Activated CD4-positive, alpha-beta memory T cell treated with anti-CD3 and anti-CD28 coated beads for 36 hours (primary cell): ENCODE measurements at regions of chr10 and their contacts with region 1.

Region 1: GRCh38 chr10:110354322-110354766 is 49.6 kb upstream of the SMNDC1 start:
- DNase-seq: peak; percentile 93
- H3K4me3 Mint-ChIP-seq: peak overlapping the region; percentile 82
- H3K27ac Mint-ChIP-seq: peak overlapping the region; percentile 98
- H3K4me1 Mint-ChIP-seq: peaks cover 79% of the 10 kb centered on the region
- H3K27me3 Mint-ChIP-seq: no peaks in the 10 kb centered on the region

Region 2: GRCh38 chr10:110076559-110077318 is 277.6 kb before region 1 on chr10:
- CTCF ChIA-PET with region 1: no interaction called
- POLR2A ChIA-PET with region 1: no interaction called
- intact Hi-C with region 1: loop called (anchors 5 kb)
- DNase-seq: no peak
- H3K4me3 Mint-ChIP-seq: peak overlapping the region; percentile 81
- H3K27ac Mint-ChIP-seq: peak overlapping the region; percentile 98
- H3K4me1 Mint-ChIP-seq: peaks cover 84% of the 10 kb centered on the region
- H3K27me3 Mint-ChIP-seq: no peaks in the 10 kb centered on the region

Region 3: DNA sequence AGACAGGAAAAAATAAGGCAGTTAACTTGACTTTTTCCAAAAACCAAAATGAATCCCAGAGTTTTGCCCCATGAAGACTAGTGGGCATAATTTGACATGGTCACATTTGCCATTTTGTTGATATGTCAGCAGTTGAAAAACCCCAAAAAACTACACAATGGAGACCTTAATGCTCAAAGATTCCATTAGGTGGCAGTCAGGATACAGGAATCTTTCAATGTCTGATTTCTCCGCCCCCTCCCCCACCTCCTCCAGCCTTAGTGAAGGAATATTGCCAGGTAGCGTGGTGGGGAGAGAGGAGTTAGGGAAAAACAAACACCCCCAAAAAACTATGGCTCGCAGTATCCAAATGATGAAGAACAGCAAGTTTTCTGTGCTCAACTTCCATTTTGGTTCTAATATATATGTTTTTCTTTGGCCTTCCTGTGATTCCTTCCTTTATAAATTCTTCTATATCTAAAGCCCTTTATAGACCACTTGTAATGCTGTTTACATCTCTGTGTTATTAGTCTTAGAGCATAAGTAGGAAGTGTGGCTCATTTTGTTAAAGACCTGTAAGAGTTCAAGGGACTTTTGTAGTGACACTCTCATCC is 42.9 kb before region 1 on chr10:
- CTCF ChIA-PET with region 1: interaction called, 21 read pairs
- POLR2A ChIA-PET with region 1: no interaction called
- intact Hi-C with region 1: loop called (anchors 1 kb)
- DNase-seq: peak; percentile 52
- H3K4me3 Mint-ChIP-seq: no peak overlapping the region
- H3K27ac Mint-ChIP-seq: peak overlapping the region; percentile 9
- H3K4me1 Mint-ChIP-seq: peaks cover 31% of the 10 kb centered on the region
- H3K27me3 Mint-ChIP-seq: peaks cover 2% of the 10 kb centered on the region

Region 4: DNA sequence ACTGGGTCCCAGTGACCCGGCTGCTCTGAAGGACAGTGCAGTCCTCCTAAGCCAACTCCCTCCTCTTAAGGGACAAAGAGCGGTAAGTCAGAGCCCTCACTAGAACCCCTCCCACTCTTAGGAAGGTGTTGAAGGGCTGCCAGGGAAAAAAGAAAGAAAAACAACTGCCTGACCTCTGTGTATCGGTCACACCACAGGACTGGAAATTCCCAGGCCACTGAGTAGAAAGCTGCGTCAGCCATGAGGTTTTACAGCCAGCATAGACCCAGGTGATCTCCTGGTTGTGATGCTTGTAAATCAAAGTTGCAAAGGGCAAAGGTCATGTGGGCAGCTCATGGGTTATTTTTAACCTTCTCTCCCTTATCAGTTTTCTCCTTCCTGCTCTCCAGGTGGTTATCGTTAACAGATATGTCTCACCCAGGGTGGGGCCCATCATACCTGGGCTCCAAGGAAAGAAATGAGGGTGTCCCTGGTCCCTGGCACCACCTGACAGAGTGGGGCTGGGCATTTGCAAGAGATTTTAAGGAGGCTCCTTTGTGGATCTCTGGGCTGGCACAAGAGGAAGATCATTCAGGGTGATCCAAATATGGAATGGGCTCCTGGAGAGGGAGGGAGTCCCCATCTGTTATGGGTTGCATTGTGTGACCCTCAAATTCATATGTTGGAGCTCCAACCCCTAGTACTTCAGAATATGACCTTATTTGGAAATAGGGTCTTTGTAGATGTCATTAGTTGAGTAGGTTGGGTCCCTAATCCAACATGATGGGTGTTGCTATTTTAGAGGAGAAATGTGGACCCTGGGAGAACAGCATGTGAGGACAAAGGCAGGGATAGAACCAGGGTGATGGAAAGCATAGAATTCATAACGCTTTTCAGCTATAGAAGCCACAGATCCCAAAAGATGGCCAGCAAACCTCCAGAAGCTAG is 41.6 kb after region 1 on chr10:
- CTCF ChIA-PET with region 1: interaction called, 4 read pairs
- POLR2A ChIA-PET with region 1: interaction called, 3 read pairs
- intact Hi-C with region 1: loop called (anchors 1 kb)
- DNase-seq: peak; percentile 86
- H3K4me3 Mint-ChIP-seq: no peak overlapping the region
- H3K27ac Mint-ChIP-seq: peak overlapping the region; percentile 79
- H3K4me1 Mint-ChIP-seq: peaks cover 48% of the 10 kb centered on the region
- H3K27me3 Mint-ChIP-seq: no peaks in the 10 kb centered on the region

Region 5: GRCh38 chr10:110502851-110503301 is 148.5 kb after region 1 on chr10:
- CTCF ChIA-PET with region 1: interaction called, 221 read pairs
- POLR2A ChIA-PET with region 1: interaction called, 112 read pairs
- intact Hi-C with region 1: loop called (anchors 1 kb)
- DNase-seq: peak; percentile 58
- H3K4me3 Mint-ChIP-seq: peak overlapping the region; percentile 96
- H3K27ac Mint-ChIP-seq: peak overlapping the region; percentile 97
- H3K4me1 Mint-ChIP-seq: peaks cover 78% of the 10 kb centered on the region
- H3K27me3 Mint-ChIP-seq: no peaks in the 10 kb centered on the region

Region 6: DNA sequence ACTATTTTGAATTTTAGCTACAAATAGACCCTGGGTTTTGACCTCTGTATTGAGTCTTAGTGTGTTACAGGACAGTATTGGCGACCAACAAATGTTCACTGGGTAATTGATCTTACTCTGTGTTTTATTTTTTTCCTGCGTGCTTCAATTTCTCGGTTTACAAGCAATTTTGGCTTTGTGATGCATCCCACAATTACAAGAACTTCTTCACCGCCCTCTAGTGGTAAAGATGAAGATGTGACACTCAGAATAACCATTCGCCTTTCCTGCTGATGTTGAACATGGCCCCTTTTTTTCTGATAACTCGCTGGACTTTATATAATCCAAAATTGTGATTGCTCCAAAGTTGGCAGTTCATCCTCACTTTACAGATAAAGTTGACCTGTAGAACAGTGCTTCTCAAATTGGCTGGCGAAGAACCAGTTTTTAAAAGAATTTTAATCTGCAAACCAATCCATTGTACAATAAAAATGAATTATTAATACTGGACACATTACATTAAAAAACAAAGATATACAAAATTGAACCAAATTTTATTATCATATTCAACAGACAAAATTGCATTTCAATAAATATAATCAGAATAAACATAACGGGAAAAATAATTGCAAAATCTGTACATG is 192.9 kb after region 1 on chr10:
- CTCF ChIA-PET with region 1: interaction called, 71 read pairs
- POLR2A ChIA-PET with region 1: no interaction called
- intact Hi-C with region 1: loop called (anchors 1 kb)
- DNase-seq: no peak
- H3K4me3 Mint-ChIP-seq: no peak overlapping the region
- H3K27ac Mint-ChIP-seq: no peak overlapping the region
- H3K4me1 Mint-ChIP-seq: peaks cover 10% of the 10 kb centered on the region
- H3K27me3 Mint-ChIP-seq: peaks cover 12% of the 10 kb centered on the region